CD4-positive, alpha-beta T cell (primary cell): ENCODE measurements at regions of chr12 and their contacts with region 1.

Region 1: DNA sequence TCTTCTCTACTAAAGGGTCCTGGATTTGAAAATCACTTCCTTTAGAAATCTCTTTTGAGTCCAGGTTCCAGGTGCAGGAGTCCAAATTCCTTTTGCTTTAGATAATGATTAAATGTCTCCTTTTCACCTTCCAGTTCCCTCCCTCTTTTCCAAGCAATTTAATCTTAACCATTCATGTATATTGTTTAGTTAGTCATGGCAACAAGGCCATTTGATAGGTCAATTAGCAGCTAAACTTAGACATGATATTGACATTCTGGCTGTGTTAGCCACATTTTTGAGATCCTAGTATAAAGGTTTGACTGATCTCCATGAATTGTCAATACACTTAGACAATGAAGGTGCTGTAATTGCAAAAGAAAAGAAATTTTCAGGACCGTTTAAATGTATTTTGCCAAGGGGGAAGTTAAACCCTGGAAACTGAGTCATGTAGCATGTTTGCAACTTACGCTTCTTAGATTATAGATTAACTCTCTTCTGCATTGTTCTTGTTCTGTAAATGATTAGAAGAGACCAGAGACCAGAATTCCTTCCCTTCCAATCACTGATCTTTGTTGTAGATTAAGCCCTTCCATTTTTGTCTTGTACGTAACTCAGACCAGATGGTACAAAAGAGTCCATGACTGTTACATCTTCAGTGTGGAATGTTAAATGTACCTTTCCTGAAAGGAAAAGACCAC is 12.4 kb upstream of the C12orf75 start:
- DNase-seq: no peak
- ATAC-seq: no peak
- H3K4me3 ChIP-seq: no peak overlapping the region
- H3K4me3 Mint-ChIP-seq: no peak overlapping the region
- H3K27ac ChIP-seq: no peak overlapping the region
- H3K27ac Mint-ChIP-seq: no peak overlapping the region
- H3K4me1 ChIP-seq: peaks cover 11% of the 10 kb centered on the region
- H3K4me1 Mint-ChIP-seq: peaks cover 19% of the 10 kb centered on the region
- H3K27me3 ChIP-seq: no peaks in the 10 kb centered on the region
- H3K27me3 Mint-ChIP-seq: no peaks in the 10 kb centered on the region
- CTCF ChIP-seq: no peak

Region 2: DNA sequence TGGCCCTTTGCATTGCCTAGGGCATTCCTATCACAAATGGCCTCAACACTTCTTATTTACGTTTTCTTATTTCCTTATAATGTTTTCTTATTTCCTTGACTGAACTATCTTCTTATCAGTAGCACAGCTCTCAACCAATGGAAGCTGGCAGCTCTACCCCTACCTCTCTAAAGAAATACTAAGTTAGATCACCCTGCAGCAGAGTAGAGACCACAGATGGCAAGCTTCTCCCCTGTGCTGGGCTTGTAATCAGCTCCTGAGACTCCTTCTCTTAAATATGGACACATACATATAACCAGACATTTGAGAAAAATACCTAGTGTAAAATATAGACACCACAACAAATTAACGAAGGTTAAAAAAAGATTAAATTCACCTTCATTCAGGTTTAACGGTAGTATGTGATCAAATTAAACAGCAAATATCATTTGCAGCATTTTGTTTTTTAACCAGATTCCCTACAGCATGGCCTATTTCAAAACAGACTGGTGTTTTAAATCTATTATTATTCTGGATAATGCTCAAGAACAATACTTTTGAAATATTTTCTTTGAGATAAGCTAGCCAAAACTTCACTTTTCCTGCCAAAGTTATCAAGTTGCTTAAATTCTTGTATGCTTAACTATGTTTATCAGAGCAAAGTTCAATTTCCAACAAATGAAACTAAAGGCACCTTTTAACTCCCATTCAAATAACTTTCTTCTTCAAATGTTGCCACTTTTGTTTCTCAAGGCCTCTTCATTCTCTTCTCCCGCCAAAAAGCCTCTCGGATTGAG is 414.2 kb before region 1 on chr12:
- CTCF ChIA-PET with region 1: no interaction called
- POLR2A ChIA-PET with region 1: no interaction called
- intact Hi-C with region 1: no loop called
- DNase-seq: no peak
- ATAC-seq: no peak
- H3K4me3 ChIP-seq: no peak overlapping the region
- H3K4me3 Mint-ChIP-seq: no peak overlapping the region
- H3K27ac ChIP-seq: no peak overlapping the region
- H3K27ac Mint-ChIP-seq: no peak overlapping the region
- H3K4me1 ChIP-seq: no peaks in the 10 kb centered on the region
- H3K4me1 Mint-ChIP-seq: no peaks in the 10 kb centered on the region
- H3K27me3 ChIP-seq: no peaks in the 10 kb centered on the region
- H3K27me3 Mint-ChIP-seq: no peaks in the 10 kb centered on the region
- CTCF ChIP-seq: no peak

Region 3: GRCh38 chr12:105338966-105339365 is 20.9 kb after region 1 on chr12:
- CTCF ChIA-PET with region 1: interaction called, 3 read pairs
- POLR2A ChIA-PET with region 1: no interaction called
- intact Hi-C with region 1: loop called in 1 of 2 experiments (anchors 2 kb)
- DNase-seq: no peak
- ATAC-seq: no peak
- H3K4me3 ChIP-seq: no peak overlapping the region
- H3K4me3 Mint-ChIP-seq: no peak overlapping the region
- H3K27ac ChIP-seq: no peak overlapping the region
- H3K27ac Mint-ChIP-seq: no peak overlapping the region
- H3K4me1 ChIP-seq: peaks cover 5% of the 10 kb centered on the region
- H3K4me1 Mint-ChIP-seq: peaks cover 22% of the 10 kb centered on the region
- H3K27me3 ChIP-seq: no peaks in the 10 kb centered on the region
- H3K27me3 Mint-ChIP-seq: no peaks in the 10 kb centered on the region
- CTCF ChIP-seq: no peak